Activated naive CD4-positive, alpha-beta T cell treated with anti-CD3 and anti-CD28 coated beads for 36 hours (primary cell): ENCODE measurements at regions of chr5 and their contacts with region 1.

Region 1: DNA sequence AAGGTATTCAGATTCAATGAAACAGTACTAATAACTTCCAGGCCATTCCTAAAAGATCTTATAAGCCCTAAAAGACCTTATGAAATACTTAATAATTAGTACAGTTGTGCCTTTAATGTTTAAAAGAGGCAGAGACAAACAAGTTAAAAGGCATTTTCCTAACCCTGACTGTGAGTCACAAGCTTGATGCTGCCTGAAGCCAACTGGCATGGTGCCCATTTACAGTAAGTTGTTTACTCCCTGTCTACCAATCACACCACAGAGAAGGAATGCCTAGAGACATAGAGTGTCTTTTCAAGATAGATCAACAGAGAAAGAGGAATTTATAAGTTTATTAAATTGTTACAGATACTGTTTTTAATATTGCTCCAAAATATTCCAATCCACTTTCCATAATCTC is 47.8 kb downstream of the NR3C1 start:
- DNase-seq: peak; percentile 60
- H3K4me3 Mint-ChIP-seq: no peak overlapping the region
- H3K27ac Mint-ChIP-seq: no peak overlapping the region
- H3K4me1 Mint-ChIP-seq: peaks cover 71% of the 10 kb centered on the region
- H3K27me3 Mint-ChIP-seq: no peaks in the 10 kb centered on the region

Region 2: GRCh38 chr5:143341807-143342570 is 13.7 kb before region 1 on chr5:
- CTCF ChIA-PET with region 1: interaction called, 5 read pairs
- intact Hi-C with region 1: loop called (anchors 1 kb)
- DNase-seq: peak; percentile 21
- H3K4me3 Mint-ChIP-seq: peak overlapping the region; percentile 6
- H3K27ac Mint-ChIP-seq: peak overlapping the region; percentile 72
- H3K4me1 Mint-ChIP-seq: peaks cover 51% of the 10 kb centered on the region
- H3K27me3 Mint-ChIP-seq: no peaks in the 10 kb centered on the region

Region 3: DNA sequence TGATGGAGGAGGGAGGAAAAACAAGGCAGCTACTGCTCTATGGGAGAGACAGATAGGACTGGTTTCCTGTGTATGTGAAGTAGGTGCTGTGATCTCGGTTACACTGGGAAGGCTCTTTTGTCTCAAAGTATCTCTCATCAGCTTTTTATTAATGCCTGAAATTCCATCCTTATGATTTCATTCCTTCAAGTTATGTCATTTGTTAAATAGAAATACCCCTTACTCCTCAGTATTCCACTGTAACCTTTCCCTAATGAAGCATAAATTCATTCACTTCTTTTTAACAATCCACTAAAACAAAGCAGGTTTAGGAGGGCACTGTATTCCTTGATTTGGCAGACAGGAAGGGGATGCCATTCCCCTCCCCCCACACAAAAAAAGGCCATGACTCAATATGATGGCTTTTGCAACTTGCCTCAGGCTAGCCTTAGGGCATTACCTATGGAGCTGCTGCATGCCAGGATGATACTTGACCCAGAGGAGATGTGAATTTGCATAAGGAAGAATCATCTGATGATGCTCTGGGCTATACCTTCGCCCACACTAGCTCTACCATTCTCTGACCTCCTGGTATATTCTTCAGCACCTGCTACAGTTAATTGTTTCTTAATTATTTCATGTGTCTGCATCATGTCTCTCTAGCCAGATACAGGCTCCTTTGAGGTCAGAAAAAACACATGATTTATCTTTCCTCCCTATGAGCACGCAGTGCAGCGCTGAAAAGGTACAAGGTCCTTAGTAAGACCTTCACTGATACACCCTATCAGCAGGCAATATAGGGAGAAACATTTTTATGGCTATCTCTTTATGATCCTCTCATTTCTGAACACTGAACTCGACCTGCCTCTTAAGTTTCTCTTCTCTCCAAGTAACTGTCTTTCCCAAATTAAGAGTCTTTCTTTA is 21.4 kb after region 1 on chr5:
- CTCF ChIA-PET with region 1: no interaction called
- intact Hi-C with region 1: loop called (anchors 2 kb)
- DNase-seq: no peak
- H3K4me3 Mint-ChIP-seq: no peak overlapping the region
- H3K27ac Mint-ChIP-seq: no peak overlapping the region
- H3K4me1 Mint-ChIP-seq: peaks cover 72% of the 10 kb centered on the region
- H3K27me3 Mint-ChIP-seq: no peaks in the 10 kb centered on the region

Region 4: DNA sequence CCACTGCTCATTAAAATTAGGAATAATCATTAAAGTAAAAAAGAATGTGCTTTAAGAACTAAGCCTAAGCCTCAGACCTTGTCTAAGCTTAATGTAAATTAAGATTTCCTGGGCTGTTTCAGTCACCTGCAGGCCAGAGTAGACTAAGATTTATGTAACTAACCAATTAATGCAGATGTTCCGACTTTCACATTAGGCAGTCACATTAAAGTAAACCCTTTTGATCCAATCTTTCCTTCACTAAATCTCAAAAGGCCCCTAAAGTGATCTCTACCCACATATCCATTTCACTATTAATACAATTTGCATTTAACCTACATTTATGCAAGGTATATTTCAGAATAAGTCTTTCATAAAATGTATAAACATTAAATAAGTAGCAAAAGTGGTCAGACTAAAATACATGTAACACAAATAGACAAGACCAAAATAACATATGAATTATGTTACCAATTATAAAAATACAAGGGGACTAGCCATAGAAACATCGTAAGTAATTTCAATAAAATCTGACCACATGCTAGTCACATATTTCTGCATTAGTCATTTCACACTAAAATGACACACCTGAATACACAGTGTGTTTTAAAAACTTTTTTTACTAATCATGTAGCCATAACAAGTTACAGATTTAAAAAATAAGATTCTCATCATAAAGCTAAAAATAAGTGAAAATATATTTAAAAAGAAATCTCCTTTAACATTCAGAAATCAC is 40.1 kb after region 1 on chr5:
- CTCF ChIA-PET with region 1: interaction called, 6 read pairs
- intact Hi-C with region 1: loop called (anchors 1 kb)
- DNase-seq: no peak
- H3K4me3 Mint-ChIP-seq: no peak overlapping the region
- H3K27ac Mint-ChIP-seq: no peak overlapping the region
- H3K4me1 Mint-ChIP-seq: peaks cover 64% of the 10 kb centered on the region
- H3K27me3 Mint-ChIP-seq: no peaks in the 10 kb centered on the region

Region 5: DNA sequence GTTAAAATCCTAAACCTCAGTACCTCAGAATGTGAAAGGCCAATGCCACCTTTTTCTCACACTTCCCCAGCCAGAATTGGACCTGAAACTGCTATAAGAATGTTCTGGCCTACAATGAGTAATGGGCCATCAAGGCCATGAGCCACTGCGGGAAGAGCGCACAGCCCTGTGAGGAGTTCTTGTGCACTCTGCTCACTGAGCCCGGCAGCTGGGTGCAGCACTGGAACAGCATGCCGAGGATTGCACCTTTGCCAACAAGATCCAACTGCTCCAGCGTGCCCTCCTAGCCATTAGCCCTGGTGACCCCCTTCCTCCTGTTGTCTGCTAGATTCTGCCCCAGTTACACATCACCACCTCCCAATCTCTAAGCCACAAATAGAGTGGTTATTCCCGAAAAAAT is 1721.3 kb after region 1 on chr5:
- CTCF ChIA-PET with region 1: no interaction called
- intact Hi-C with region 1: no loop called
- DNase-seq: no peak
- H3K4me3 Mint-ChIP-seq: no peak overlapping the region
- H3K27ac Mint-ChIP-seq: no peak overlapping the region
- H3K4me1 Mint-ChIP-seq: no peaks in the 10 kb centered on the region
- H3K27me3 Mint-ChIP-seq: no peaks in the 10 kb centered on the region